Heart right ventricle (tissue), 16 donors: ENCODE measurements at regions of chr10 and their contacts with region 1.

Region 1: DNA sequence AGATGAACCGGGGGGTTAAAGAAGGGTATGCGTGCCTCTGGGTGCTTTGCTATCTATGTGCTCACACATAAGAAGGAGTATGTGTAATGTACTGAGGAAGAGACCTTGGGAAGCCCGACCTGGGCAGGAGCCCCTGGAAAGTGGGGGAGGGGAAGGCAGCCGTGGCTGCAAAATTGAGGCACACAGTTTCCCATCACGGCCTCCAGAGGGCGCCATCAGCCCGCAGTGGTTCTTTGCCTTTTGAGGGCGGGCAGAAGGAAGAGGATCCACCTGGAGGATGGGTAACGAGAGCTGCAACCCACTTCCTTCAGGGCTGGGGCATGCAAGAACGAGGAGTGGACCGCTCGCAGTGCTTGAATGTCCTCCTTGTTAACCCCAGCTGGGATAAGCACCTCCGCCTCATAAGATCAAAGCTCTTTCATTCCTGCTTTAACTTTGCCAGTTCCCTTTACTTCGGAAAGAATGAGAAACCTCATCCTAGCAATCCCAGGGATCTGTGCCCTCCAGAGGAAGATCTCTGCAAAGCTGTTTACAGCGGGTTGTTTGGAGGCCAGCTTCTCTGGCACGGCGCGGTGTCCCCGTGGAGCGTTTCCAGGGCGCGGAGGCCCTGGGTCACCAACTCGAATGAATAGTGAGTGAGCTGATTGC is 77.9 kb downstream of the PCGF5 start:
- DNase-seq: peak; percentile 68 to 74
- ATAC-seq: peak; percentile 84 to 92 (median 88)
- H3K4me3 ChIP-seq: peak overlapping the region in 9 of 10 donors; percentile 11 to 58 (median 49)
- H3K27ac ChIP-seq: peak overlapping the region in 1 of 10 donors; percentile 25
- H3K4me1 ChIP-seq: peaks cover 0 to 12% (median 6%) of the 10 kb centered on the region in 9 donors
- H3K27me3 ChIP-seq: peaks cover 0 to 6% (median 0%) of the 10 kb centered on the region in 7 donors
- CTCF ChIP-seq: peak; percentile 89 to 95 (median 92)

Region 2: GRCh38 chr10:90890347-90890746 is 408.0 kb before region 1 on chr10:
- intact Hi-C with region 1: no loop called
- DNase-seq: no peak
- ATAC-seq: no peak
- H3K4me3 ChIP-seq: no peak overlapping the region
- H3K27ac ChIP-seq: no peak overlapping the region
- H3K4me1 ChIP-seq: peaks cover 0 to 1% (median 0%) of the 10 kb centered on the region in 9 donors
- H3K27me3 ChIP-seq: no peaks in the 10 kb centered on the region
- CTCF ChIP-seq: no peak

Region 3: GRCh38 chr10:91198781-91199180 is 99.6 kb before region 1 on chr10:
- intact Hi-C with region 1: no loop called
- DNase-seq: no peak
- ATAC-seq: peak in 6 of 8 donors; percentile 13 to 66 (median 30)
- H3K4me3 ChIP-seq: no peak overlapping the region
- H3K27ac ChIP-seq: peak overlapping the region in 8 of 10 donors; percentile 7 to 85 (median 47)
- H3K4me1 ChIP-seq: peaks cover 0 to 80% (median 59%) of the 10 kb centered on the region in 9 donors
- H3K27me3 ChIP-seq: no peaks in the 10 kb centered on the region
- CTCF ChIP-seq: no peak

Region 4: GRCh38 chr10:91242940-91243339 is 55.4 kb before region 1 on chr10:
- intact Hi-C with region 1: no loop called
- DNase-seq: no peak
- ATAC-seq: no peak
- H3K4me3 ChIP-seq: no peak overlapping the region
- H3K27ac ChIP-seq: no peak overlapping the region
- H3K4me1 ChIP-seq: peaks cover 0 to 28% (median 11%) of the 10 kb centered on the region in 9 donors
- H3K27me3 ChIP-seq: no peaks in the 10 kb centered on the region
- CTCF ChIP-seq: no peak

Region 5: GRCh38 chr10:91349381-91349780 is 51.0 kb after region 1 on chr10:
- intact Hi-C with region 1: no loop called
- DNase-seq: peak in 1 of 2 donors; percentile 16
- ATAC-seq: peak; percentile 58 to 96 (median 90)
- H3K4me3 ChIP-seq: no peak overlapping the region
- H3K27ac ChIP-seq: peak overlapping the region in 6 of 10 donors; percentile 30 to 75 (median 73)
- H3K4me1 ChIP-seq: peaks cover 0 to 26% (median 11%) of the 10 kb centered on the region in 9 donors
- H3K27me3 ChIP-seq: no peaks in the 10 kb centered on the region
- CTCF ChIP-seq: no peak

Region 6: DNA sequence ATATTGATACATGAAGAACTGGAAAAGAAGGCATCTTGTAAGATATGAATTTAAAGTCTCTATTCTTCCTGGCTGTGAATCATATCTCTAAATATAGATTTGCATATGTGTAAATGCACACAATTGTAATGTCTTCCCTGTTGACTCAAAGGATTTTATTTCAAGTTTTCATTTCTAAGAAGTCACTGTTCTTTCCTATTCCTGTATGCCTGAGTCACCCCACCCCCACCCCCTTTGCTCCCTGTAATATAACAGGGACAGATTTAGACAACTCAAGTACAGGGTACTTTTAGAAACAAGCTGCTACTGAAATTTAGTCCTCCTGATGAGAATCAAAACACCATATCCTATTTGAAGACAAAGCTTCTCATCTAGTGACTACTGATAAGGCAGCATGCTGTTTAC is 68.8 kb after region 1 on chr10:
- intact Hi-C with region 1: loop called in 8 of 10 experiments (anchors 2 to 10 kb)
- DNase-seq: no peak
- ATAC-seq: peak in 6 of 8 donors; percentile 58 to 94 (median 81)
- H3K4me3 ChIP-seq: no peak overlapping the region
- H3K27ac ChIP-seq: peak overlapping the region in 1 of 10 donors; percentile 7
- H3K4me1 ChIP-seq: peaks cover 0 to 22% (median 0%) of the 10 kb centered on the region in 9 donors
- H3K27me3 ChIP-seq: peaks cover 0 to 14% (median 0%) of the 10 kb centered on the region in 7 donors
- CTCF ChIP-seq: no peak

Region 7: DNA sequence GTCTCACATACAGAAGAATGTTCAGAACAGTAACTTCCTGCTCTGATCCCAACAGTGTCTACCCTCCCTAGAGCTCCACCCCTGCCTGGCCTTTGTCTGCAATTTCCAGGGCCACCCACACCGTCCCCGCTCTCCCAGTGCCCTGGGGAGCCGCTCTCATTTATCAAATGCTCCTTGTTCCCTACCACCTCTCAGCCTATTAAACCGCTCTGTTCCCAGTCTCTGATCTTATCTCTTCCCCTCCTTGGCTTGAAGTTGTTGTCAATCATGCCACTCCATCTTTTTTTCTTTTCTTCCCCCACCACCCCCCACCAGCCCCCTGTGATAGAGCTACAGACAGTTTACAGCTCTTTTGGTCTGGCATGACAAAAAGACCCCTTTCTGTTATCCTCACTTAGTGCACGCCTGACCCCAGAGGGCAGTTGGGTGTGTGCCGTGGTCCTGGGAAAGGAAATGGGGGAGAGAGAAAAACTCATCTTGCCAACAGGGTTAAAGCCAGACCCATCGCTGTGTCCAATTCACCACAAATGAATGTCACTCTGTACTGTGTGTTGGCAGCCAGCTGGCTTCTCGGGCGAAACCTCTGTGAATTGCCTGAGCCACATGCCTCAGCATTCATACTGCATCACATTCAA is 83.0 kb after region 1 on chr10:
- intact Hi-C with region 1: loop called in 5 of 10 experiments (anchors 5 to 10 kb)
- DNase-seq: peak in 1 of 2 donors; percentile 20
- ATAC-seq: peak; percentile 45 to 94 (median 86)
- H3K4me3 ChIP-seq: peak overlapping the region in 5 of 10 donors; percentile 13 to 28 (median 17)
- H3K27ac ChIP-seq: peak overlapping the region in 3 of 10 donors; percentile 2 to 34 (median 3)
- H3K4me1 ChIP-seq: peaks cover 3 to 19% (median 12%) of the 10 kb centered on the region in 9 donors
- H3K27me3 ChIP-seq: peaks cover 0 to 10% (median 0%) of the 10 kb centered on the region in 7 donors
- CTCF ChIP-seq: no peak

Region 8: GRCh38 chr10:91541481-91541880 is 243.1 kb after region 1 on chr10:
- intact Hi-C with region 1: loop called in 2 of 10 experiments (anchors 5 to 10 kb)
- DNase-seq: no peak
- ATAC-seq: peak in 5 of 8 donors; percentile 14 to 58 (median 37)
- H3K4me3 ChIP-seq: no peak overlapping the region
- H3K27ac ChIP-seq: no peak overlapping the region
- H3K4me1 ChIP-seq: peaks cover 0 to 23% (median 6%) of the 10 kb centered on the region in 9 donors
- H3K27me3 ChIP-seq: no peaks in the 10 kb centered on the region
- CTCF ChIP-seq: no peak

Region 9: GRCh38 chr10:91643700-91644099 is 345.4 kb after region 1 on chr10:
- intact Hi-C with region 1: loop called in 3 of 10 experiments (anchors 10 kb)
- DNase-seq: no peak
- ATAC-seq: no peak
- H3K4me3 ChIP-seq: no peak overlapping the region
- H3K27ac ChIP-seq: no peak overlapping the region
- H3K4me1 ChIP-seq: no peaks in the 10 kb centered on the region
- H3K27me3 ChIP-seq: peaks cover 0 to 6% (median 3%) of the 10 kb centered on the region in 7 donors
- CTCF ChIP-seq: peak in 4 of 9 donors; percentile 9 to 27 (median 20)